Activated T-helper 1 cell treated with anti-CD3 and anti-CD28 coated beads, Interleukin-12 subunit alpha, Interleukin-12 subunit beta, Interleukin-2, Interleukin-4 antibody, amounts not matched to agents 30 ng/mL and 10 ng/mL and 1 ng/mL, durations not matched to agents 14 hours and 24 hours and 36 hours (primary cell): ENCODE measurements at regions of chr11 and their contacts with region 1.

Region 1: DNA sequence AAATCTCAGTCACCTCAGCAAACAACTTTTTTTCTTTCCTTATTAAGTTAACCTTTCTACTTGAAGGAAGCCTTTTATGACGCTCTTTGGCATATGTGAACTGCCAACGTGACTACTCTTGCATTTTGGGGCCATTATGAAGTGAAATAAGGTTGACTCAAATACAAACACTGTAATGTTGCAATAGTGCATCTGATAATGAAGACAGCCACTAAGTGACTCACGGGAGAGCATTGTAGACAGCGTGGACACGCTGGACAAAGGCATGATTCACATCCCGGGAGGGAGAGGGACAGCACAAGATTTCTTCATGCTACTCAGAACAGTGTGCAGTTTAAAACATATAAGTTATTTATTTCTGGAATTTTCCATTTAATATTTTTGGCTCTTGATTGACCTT is 560.8 kb downstream of the ETS1 start:
- DNase-seq: no peak
- H3K4me3 Mint-ChIP-seq: no peak overlapping the region
- H3K27ac Mint-ChIP-seq: no peak overlapping the region
- H3K4me1 Mint-ChIP-seq: peaks cover 4% of the 10 kb centered on the region
- H3K27me3 Mint-ChIP-seq: peaks cover 42% of the 10 kb centered on the region

Region 2: GRCh38 chr11:127873478-127873877 is 153.1 kb before region 1 on chr11:
- intact Hi-C with region 1: no loop called
- DNase-seq: no peak
- H3K4me3 Mint-ChIP-seq: no peak overlapping the region
- H3K27ac Mint-ChIP-seq: no peak overlapping the region
- H3K4me1 Mint-ChIP-seq: no peaks in the 10 kb centered on the region
- H3K27me3 Mint-ChIP-seq: no peaks in the 10 kb centered on the region

Region 3: DNA sequence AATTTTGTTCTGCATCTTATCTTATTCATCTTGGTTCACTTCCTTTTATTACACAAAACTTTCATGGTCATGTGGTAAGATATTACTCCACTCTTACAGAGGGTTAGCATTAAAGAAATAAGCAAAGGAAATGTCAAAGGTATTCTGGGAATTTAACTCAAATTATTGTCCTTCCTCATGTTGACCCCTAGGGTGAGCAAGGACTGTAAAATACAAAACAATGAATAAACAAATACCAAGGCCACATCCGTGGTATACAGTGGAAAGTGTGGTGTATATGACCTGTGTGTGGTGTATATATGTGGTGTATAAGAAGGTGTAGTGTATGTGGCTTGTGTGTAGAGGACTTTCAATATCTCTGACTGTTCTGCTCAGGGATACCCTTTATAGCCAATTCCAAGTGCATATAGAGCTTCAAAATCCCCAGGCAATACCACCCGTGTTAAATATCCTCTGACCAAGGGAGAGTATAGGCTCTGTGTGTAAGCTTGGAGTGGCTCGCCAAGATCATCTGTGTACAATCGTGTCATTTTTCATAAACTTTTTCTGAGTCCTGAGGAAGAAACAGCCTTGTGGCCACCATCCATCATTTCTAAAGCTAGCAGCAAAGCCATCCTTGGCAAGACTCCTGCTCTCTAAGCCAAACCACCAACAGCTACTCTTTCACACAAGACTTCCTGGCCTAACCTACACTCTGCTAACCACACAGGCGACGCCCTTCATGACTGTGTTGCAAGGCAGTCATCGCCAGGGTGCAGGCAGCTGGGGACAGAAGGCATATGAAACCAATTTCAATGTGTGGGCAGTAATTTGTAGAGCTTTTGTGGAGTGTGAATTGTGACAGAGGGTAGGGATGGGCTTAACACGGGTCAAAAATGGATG is 12.8 kb after region 1 on chr11:
- intact Hi-C with region 1: no loop called
- DNase-seq: peak; percentile 77
- H3K4me3 Mint-ChIP-seq: peak overlapping the region; percentile 68
- H3K27ac Mint-ChIP-seq: peak overlapping the region; percentile 92
- H3K4me1 Mint-ChIP-seq: peaks cover 34% of the 10 kb centered on the region
- H3K27me3 Mint-ChIP-seq: no peaks in the 10 kb centered on the region

Region 4: DNA sequence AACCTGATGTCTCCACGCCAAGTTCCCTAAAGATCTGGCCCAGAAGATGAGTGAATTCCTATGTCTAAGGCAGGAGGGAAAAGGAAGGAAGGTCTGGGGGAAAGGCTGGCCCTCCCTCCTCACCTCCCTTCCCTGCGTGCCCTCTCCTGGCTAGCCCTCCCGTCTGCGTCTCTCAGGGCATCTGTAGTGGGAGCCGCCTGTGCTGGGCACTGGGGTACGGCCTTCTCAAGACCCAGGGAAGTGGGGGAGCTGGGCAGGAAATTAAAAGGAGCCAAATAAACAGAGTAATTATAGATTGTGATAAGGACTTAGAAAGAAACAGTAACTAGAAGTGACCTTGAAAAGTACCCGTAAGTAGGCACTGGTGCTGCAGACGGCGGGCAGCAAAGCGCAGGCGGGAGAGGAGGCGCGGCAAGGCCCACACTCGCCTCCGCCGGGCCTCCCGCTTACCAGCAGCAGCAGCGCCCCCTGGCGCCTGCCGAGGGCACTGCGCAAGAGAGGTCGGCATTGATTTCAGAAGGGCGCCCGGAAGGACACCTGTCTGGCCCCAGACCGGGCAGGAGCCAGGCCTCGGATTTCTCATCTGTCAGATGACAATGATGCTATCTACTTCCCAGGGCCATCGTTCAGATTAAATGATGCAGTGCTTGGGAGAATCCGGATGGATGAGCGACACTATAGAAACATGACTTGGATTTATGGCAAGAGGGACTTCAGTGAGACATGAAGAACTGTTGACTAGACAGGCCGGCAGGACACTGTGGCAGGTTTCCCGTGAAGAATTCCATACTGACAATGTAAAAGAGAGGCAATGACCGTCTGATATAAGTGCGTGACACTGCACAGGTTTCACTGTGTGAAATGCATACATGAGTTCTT is 833.2 kb after region 1 on chr11:
- intact Hi-C with region 1: loop called (anchors 1 kb)
- DNase-seq: peak; percentile 71
- H3K4me3 Mint-ChIP-seq: no peak overlapping the region
- H3K27ac Mint-ChIP-seq: no peak overlapping the region
- H3K4me1 Mint-ChIP-seq: peaks cover 6% of the 10 kb centered on the region
- H3K27me3 Mint-ChIP-seq: peaks cover 13% of the 10 kb centered on the region

Region 5: GRCh38 chr11:128956401-128957201 is 930.0 kb after region 1 on chr11:
- intact Hi-C with region 1: loop called (anchors 2 kb)
- DNase-seq: no peak
- H3K4me3 Mint-ChIP-seq: no peak overlapping the region
- H3K27ac Mint-ChIP-seq: no peak overlapping the region
- H3K4me1 Mint-ChIP-seq: peaks cover 12% of the 10 kb centered on the region
- H3K27me3 Mint-ChIP-seq: peaks cover 26% of the 10 kb centered on the region